ENCODE measurements at regions of chr3 and their contacts with region 1.

Region 1: DNA sequence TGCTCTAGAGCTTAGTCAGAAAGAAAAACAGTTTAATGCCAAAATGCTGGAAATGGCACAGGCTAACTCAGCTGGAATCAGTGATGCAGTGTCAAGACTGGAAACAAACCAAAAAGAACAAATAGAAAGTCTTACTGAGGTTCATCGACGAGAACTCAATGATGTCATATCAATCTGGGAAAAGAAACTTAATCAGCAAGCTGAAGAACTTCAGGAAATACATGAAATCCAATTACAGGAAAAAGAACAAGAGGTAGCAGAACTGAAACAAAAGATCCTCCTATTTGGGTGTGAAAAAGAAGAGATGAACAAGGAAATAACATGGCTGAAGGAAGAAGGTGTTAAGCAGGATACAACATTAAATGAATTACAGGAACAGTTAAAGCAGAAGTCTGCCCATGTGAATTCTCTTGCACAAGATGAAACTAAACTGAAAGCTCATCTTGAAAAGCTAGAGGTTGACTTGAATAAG is 150.5 kb upstream of the LRRFIP2 start:
- DNase-seq: no peak
- CTCF ChIP-seq: no peak

Region 2: GRCh38 chr3:37221407-37221806 is 103.5 kb before region 1 on chr3:
- CTCF ChIA-PET with region 1: no interaction called
- POLR2A ChIA-PET with region 1: no interaction called
- DNase-seq: no peak
- CTCF ChIP-seq: no peak

Region 3: DNA sequence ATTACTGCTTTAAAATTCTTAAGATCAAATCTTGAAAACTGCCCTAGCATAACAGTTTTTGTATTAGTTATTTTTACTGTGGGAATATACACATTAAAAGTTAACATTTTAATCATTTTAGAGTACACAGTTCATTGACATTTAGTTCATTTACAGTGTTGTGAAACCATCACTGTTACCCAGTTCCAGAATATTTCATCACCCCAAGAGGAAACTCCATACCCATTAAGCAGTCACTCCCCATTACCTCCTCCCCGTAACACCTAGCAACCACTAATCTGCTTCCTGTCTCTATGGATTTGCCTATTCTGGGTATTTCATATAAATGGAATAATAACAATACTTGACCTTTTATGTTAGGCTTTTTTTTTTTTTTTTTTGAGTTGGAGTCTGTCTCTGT is 13.6 kb after region 1 on chr3:
- CTCF ChIA-PET with region 1: interaction called, 11 read pairs
- POLR2A ChIA-PET with region 1: no interaction called
- DNase-seq: no peak
- CTCF ChIP-seq: no peak

Measured in GM10248 (cell line).